GM12878 (cell line): ENCODE measurements at regions of chr17 and their contacts with region 1.

Region 1: GRCh38 chr17:56819431-56820145 is 14.1 kb downstream of the C17orf67 start:
- DNase-seq: peak; percentile 53
- ATAC-seq: peak; percentile 96
- H3K4me3 ChIP-seq: no peak overlapping the region
- H3K27ac ChIP-seq: no peak overlapping the region
- H3K4me1 ChIP-seq: no peaks in the 10 kb centered on the region; the same call in 1 of the 2 replicates
- H3K27me3 ChIP-seq: no peaks in the 10 kb centered on the region
- CTCF ChIP-seq: peak; percentile 76 to 85 (median 81)
- EP300 ChIP-seq: no peak
- POLR2A ChIP-seq: no peak
- RAD21 ChIP-seq: peak; percentile 81

Region 2: GRCh38 chr17:56624315-56624714 is 195.3 kb before region 1 on chr17:
- CTCF ChIA-PET with region 1: no interaction called
- POLR2A ChIA-PET with region 1: no interaction called
- RAD21 ChIA-PET with region 1: no interaction called
- SMC1A ChIA-PET with region 1: no interaction called
- in situ Hi-C with region 1: no loop called
- intact Hi-C with region 1: no loop called
- DNase-seq: no peak
- ATAC-seq: no peak
- H3K4me3 ChIP-seq: no peak overlapping the region
- H3K27ac ChIP-seq: no peak overlapping the region
- H3K4me1 ChIP-seq: no peaks in the 10 kb centered on the region
- H3K27me3 ChIP-seq: no peaks in the 10 kb centered on the region; a peak in 2 of 4 replicates
- CTCF ChIP-seq: no peak
- EP300 ChIP-seq: no peak
- POLR2A ChIP-seq: no peak
- RAD21 ChIP-seq: no peak

Region 3: GRCh38 chr17:56926701-56927590 is 107.4 kb after region 1 on chr17:
- CTCF ChIA-PET with region 1: interaction called, 19 read pairs
- POLR2A ChIA-PET with region 1: no interaction called
- RAD21 ChIA-PET with region 1: interaction called, 3 read pairs
- SMC1A ChIA-PET with region 1: interaction called, 21 read pairs
- in situ Hi-C with region 1: no loop called
- intact Hi-C with region 1: no loop called
- DNase-seq: no peak
- ATAC-seq: no peak
- H3K4me3 ChIP-seq: no peak overlapping the region
- H3K27ac ChIP-seq: no peak overlapping the region
- H3K4me1 ChIP-seq: no peaks in the 10 kb centered on the region
- H3K27me3 ChIP-seq: no peaks in the 10 kb centered on the region
- CTCF ChIP-seq: no peak
- EP300 ChIP-seq: no peak
- POLR2A ChIP-seq: no peak
- RAD21 ChIP-seq: no peak

Region 4: GRCh38 chr17:56939901-56940343 is 120.3 kb after region 1 on chr17:
- CTCF ChIA-PET with region 1: interaction called, 184 read pairs
- POLR2A ChIA-PET with region 1: interaction called, 3 read pairs
- RAD21 ChIA-PET with region 1: interaction called, 22 read pairs
- SMC1A ChIA-PET with region 1: interaction called, 27 read pairs
- in situ Hi-C with region 1: loop called (anchors 5 kb)
- intact Hi-C with region 1: loop called (anchors 1 kb)
- DNase-seq: no peak
- ATAC-seq: peak; percentile 95
- H3K4me3 ChIP-seq: no peak overlapping the region
- H3K27ac ChIP-seq: no peak overlapping the region
- H3K4me1 ChIP-seq: no peaks in the 10 kb centered on the region
- H3K27me3 ChIP-seq: no peaks in the 10 kb centered on the region
- CTCF ChIP-seq: peak; percentile 69 to 75 (median 74)
- EP300 ChIP-seq: no peak
- POLR2A ChIP-seq: no peak
- RAD21 ChIP-seq: peak; percentile 92

Region 5: DNA sequence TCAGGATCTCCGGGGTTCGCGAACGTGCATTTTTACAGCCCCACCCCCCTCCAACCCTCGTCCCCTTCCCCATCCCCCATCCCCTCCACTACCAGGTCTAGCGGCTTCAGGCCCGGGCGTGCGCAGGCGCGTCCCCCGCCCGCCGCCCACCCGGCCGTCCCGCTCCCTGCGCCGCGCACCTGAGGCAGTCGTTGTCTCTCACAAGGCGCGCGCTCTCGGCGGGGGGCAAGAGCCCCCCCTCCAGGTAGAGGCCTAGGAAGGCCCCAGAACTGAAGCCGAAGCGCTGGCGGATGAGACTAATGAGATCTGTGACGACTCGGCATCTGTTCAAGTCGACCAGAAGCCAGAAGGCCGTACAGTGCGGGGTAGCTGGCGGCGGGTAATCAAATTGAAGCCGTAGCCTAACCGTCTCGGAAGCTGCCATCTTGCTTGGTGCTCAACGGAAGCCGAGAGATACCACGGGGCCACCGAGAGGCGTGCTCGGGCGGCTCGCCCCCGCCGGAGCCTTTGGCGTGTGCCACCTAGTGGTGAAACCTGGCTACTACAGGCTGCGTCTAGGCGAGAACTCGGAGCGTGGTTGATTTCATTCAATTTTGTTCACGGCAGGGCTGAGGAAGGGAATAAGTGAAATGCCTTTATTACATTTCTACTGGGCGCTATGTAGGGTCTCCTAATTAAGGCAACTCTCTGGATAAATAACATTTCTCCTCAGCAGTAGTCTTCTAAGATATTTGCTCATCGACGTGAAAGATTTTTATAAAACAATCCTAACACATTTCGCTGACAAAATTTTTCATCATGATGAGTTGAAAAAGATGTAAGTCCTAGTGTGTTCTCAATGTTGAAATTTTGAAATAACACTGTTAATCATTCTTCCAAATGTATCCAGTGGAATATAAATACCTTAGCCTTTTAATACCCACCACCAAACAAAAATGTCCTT is 141.3 kb after region 1 on chr17 and contains the start of gene COIL:
- CTCF ChIA-PET with region 1: interaction called, 12 read pairs
- POLR2A ChIA-PET with region 1: no interaction called
- RAD21 ChIA-PET with region 1: interaction called, 3 read pairs
- SMC1A ChIA-PET with region 1: interaction called, 3 read pairs
- in situ Hi-C with region 1: no loop called
- intact Hi-C with region 1: no loop called
- DNase-seq: peak; percentile 65
- ATAC-seq: peak; percentile 99
- H3K4me3 ChIP-seq: peak within 1 kb of the TSS; percentile 95
- H3K27ac ChIP-seq: peak within 1 kb of the TSS; percentile 77
- H3K4me1 ChIP-seq: no peaks in the 10 kb centered on the region; the same call in 1 of the 2 replicates
- H3K27me3 ChIP-seq: no peaks in the 10 kb centered on the region
- CTCF ChIP-seq: peak; percentile 94 to 99 (median 97)
- EP300 ChIP-seq: no peak
- POLR2A ChIP-seq: peak; percentile 93
- RAD21 ChIP-seq: peak; percentile 64
- polyA plus RNA-seq, gene COIL: 14.2 to 16.8 TPM

Region 6: DNA sequence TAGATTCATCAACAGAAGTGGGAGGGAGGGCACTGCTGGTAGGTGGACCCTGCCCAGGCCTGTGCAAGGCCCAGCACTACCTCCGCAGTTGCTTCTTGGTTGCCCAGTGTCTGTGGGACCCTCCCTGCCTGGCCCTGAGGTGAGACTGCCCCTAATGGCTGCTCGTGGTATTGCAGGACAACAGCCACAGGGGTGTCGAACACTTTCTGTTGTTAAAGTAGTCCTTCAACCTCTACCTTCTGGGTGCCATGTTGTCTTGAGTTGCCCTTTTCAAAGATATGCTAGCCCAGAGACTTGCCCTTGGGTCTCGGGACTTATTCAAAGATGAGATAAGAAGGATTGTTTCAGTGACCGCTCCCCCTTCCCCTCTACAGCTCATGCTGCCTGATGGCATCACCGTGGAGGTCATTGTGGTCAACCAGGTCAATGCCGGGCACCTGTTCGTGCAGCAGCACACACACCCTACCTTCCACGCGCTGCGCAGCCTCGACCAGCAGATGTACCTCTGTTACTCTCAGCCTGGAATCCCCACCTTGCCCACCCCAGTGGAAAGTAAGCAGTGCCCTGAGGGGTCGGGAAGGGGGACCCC is 294.6 kb after region 1 on chr17:
- CTCF ChIA-PET with region 1: no interaction called
- POLR2A ChIA-PET with region 1: no interaction called
- RAD21 ChIA-PET with region 1: interaction called, 4 read pairs
- SMC1A ChIA-PET with region 1: no interaction called
- in situ Hi-C with region 1: no loop called
- intact Hi-C with region 1: loop called (anchors 1 kb)
- DNase-seq: no peak
- ATAC-seq: peak; percentile 92
- H3K4me3 ChIP-seq: no peak overlapping the region
- H3K27ac ChIP-seq: no peak overlapping the region
- H3K4me1 ChIP-seq: no peaks in the 10 kb centered on the region
- H3K27me3 ChIP-seq: no peaks in the 10 kb centered on the region
- CTCF ChIP-seq: peak; percentile 84 to 93 (median 89)
- EP300 ChIP-seq: no peak
- POLR2A ChIP-seq: no peak
- RAD21 ChIP-seq: peak; percentile 76